BJ (cell line): ENCODE measurements at regions of chrX and their contacts with region 1.

Region 1: GRCh38 chrX:13662355-13662791 is 9.4 kb downstream of the TCEANC start:
- DNase-seq: peak; percentile 73
- H3K4me3 ChIP-seq: peak overlapping the region; percentile 14; the same call in 1 of the 2 replicates
- H3K27me3 ChIP-seq: no peaks in the 10 kb centered on the region
- CTCF ChIP-seq: no peak

Region 2: DNA sequence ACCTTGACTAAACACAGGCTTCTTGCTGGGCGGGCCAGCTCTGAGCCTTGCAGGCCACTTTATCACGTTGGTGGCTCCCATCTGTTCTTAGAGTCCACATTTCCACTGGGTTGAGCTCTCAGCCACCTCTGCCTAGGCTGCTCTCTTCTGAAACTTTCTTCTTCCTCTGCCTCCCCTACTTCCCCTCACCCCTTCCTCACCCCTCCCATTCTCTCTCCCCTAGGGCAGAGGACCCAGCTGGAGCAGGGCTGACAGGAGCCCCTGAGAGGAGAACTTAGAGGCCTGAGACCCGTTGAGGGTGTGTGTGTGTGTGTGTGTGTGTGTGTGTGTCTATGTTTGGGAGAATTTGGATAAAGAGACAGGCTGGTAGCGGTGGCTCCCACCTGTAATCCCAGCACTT is 707.4 kb before region 1 on chrX:
- CTCF ChIA-PET with region 1: interaction called, 4 read pairs
- POLR2A ChIA-PET with region 1: interaction called, 11 read pairs
- DNase-seq: no peak
- H3K4me3 ChIP-seq: no peak overlapping the region
- H3K27me3 ChIP-seq: no peaks in the 10 kb centered on the region
- CTCF ChIP-seq: no peak